ENCODE measurements at regions of chr11 and their contacts with region 1.

Region 1: DNA sequence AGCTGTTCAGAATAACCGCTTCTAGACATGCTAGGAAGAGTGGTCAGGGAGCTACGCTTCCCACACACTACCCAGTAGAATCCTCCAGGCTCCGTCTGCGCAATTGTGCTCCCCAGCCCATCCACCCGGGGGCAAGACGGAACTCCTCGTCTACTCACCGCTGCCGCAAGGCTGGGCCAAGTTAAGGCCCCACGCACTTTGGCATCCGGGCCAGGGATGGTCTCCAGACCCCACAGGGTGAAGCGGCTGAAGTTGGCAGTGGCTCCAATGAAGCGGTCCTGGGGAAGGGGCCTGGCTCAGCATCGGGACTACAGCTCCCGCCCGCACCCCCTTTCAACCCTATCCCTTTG is 736 bp downstream of the RNASEH2C start:
- DNase-seq: no peak
- H3K4me3 ChIP-seq: peak overlapping the region; percentile 68 to 91 (median 76)
- H3K4me3 Mint-ChIP-seq: peak overlapping the region; percentile 92 to 96
- H3K27ac ChIP-seq: peak overlapping the region; percentile 62 to 71
- H3K27ac Mint-ChIP-seq: peak overlapping the region; percentile 81 to 91 (median 85)
- H3K4me1 ChIP-seq: peaks cover 21 to 30% of the 10 kb centered on the region in 2 donors
- H3K4me1 Mint-ChIP-seq: peaks cover 30% of the 10 kb centered on the region
- H3K27me3 ChIP-seq: no peaks in the 10 kb centered on the region
- H3K27me3 Mint-ChIP-seq: peaks cover 0 to 4% (median 2%) of the 10 kb centered on the region in 3 donors
- CTCF ChIP-seq: no peak

Region 2: GRCh38 chr11:65779851-65780577 is 60.2 kb after region 1 on chr11:
- intact Hi-C with region 1: loop called in 1 of 2 experiments (anchors 5 kb)
- DNase-seq: peak; percentile 81 to 87 (median 86)
- H3K4me3 ChIP-seq: peak overlapping the region; percentile 76 to 99 (median 99)
- H3K4me3 Mint-ChIP-seq: peak overlapping the region; percentile 89 to 94
- H3K27ac ChIP-seq: peak overlapping the region; percentile 98 to 99
- H3K27ac Mint-ChIP-seq: peak overlapping the region; percentile 89 to 99 (median 96)
- H3K4me1 ChIP-seq: peaks cover 52 to 57% of the 10 kb centered on the region in 2 donors
- H3K4me1 Mint-ChIP-seq: peaks cover 41% of the 10 kb centered on the region
- H3K27me3 ChIP-seq: peaks cover under 1 to 32% of the 10 kb centered on the region in 2 donors
- H3K27me3 Mint-ChIP-seq: peaks cover 17 to 31% (median 23%) of the 10 kb centered on the region in 3 donors
- CTCF ChIP-seq: peak; percentile 100

Measured in CD14-positive monocyte (primary cell).